Activated CD4-positive, alpha-beta T cell treated with anti-CD3 and anti-CD28 coated beads for 36 hours (primary cell): ENCODE measurements at regions of chr10 and their contacts with region 1.

Region 1: DNA sequence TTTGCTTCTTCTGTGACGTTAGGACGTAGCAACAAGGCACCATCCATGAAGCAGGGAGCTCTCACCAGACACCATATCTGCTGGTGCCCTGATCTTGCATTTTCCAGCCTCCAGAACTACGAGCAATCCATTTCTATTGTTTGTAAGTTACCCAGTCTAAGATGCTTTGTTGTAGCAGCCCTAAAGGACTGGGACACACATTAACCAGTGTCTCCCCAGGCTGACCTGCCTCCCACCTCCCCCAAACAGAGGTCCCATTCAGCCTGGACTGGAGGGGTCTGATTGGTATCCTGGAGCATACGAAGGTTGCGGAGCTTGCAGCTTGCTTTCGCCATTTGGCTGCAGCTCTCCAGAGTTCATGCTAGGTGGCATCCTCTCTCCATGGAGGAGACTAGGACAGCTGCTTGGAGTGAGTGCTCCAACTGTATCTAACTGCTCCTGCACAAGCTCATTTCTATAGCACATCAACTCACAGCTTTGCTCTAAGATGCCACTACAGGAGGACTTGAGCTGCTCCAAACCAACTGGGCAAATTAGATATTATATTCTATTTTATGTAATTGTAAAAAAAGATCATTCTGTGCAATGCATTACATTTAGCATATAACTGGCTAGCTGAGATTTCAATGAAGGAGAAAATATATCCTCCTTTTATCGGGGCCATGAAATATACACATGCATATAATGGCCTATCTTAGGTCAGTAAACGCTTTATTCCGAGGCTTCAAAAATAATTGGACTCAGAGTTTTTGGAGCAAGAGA is 8.0 kb upstream of the GRK5 start:
- DNase-seq: peak; percentile 66
- ATAC-seq: peak; percentile 85
- H3K4me3 Mint-ChIP-seq: no peak overlapping the region
- H3K27ac Mint-ChIP-seq: no peak overlapping the region
- H3K4me1 Mint-ChIP-seq: peaks cover 13% of the 10 kb centered on the region
- H3K27me3 Mint-ChIP-seq: no peaks in the 10 kb centered on the region

Region 2: GRCh38 chr10:119139464-119140067 is 59.8 kb before region 1 on chr10:
- CTCF ChIA-PET with region 1: interaction called, 6 read pairs
- POLR2A ChIA-PET with region 1: no interaction called
- intact Hi-C with region 1: loop called in 1 of 2 experiments (anchors 2 kb)
- DNase-seq: peak; percentile 73
- ATAC-seq: peak; percentile 76
- H3K4me3 Mint-ChIP-seq: no peak overlapping the region
- H3K27ac Mint-ChIP-seq: peak overlapping the region; percentile 14
- H3K4me1 Mint-ChIP-seq: peaks cover 14% of the 10 kb centered on the region
- H3K27me3 Mint-ChIP-seq: no peaks in the 10 kb centered on the region

Region 3: DNA sequence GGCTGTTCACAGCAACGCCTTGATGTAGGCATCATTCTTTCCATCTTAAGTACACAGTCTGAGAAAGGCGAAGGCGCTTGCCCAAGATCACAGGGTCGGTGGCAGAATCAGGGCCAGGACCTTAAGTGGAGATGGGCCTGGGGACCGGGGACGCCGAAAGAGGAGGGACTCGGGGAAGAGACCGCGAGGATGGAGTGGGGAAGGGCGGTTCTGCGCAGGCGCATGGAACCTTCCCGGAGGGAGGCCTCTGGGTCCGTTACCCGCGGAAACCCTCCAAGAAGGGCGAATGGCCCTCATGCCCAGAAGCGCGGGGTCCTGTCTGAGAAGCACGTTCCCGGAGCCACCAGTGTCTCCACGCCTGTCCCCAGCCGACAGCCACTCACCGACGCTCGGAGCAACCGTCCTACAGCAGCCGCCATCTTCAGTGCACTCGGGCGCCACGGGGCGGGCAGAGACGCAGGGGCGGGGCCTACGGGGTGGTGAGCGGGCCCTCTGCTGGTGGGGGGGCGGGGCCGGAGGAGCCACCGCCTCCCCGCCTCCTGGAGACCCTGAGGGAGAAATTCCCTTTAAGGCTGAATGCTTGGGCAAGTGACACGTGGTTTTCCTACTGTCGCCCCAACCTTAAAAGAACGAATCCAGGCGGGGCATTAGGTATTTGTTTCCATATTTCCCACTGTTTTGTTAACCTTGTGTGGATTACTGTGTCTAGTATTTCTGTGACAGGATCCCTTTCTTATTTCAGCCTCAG is 20.9 kb before region 1 on chr10 and contains the start of gene PRDX3:
- CTCF ChIA-PET with region 1: interaction called, 21 read pairs
- POLR2A ChIA-PET with region 1: no interaction called
- intact Hi-C with region 1: no loop called
- DNase-seq: peak; percentile 98
- ATAC-seq: peak; percentile 95
- H3K4me3 Mint-ChIP-seq: peak within 1 kb of the TSS; percentile 88
- H3K27ac Mint-ChIP-seq: peak within 1 kb of the TSS; percentile 95
- H3K4me1 Mint-ChIP-seq: peaks cover 36% of the 10 kb centered on the region
- H3K27me3 Mint-ChIP-seq: no peaks in the 10 kb centered on the region
- total RNA-seq, gene PRDX3: 160 to 217 TPM

Region 4: GRCh38 chr10:119416855-119417254 is 217.4 kb after region 1 on chr10:
- CTCF ChIA-PET with region 1: interaction called, 33 read pairs
- POLR2A ChIA-PET with region 1: no interaction called
- intact Hi-C with region 1: loop called (anchors 1 to 2 kb)
- DNase-seq: peak; percentile 86
- ATAC-seq: peak; percentile 93
- H3K4me3 Mint-ChIP-seq: no peak overlapping the region
- H3K27ac Mint-ChIP-seq: no peak overlapping the region
- H3K4me1 Mint-ChIP-seq: no peaks in the 10 kb centered on the region
- H3K27me3 Mint-ChIP-seq: no peaks in the 10 kb centered on the region

Region 5: GRCh38 chr10:119489991-119490326 is 290.5 kb after region 1 on chr10:
- CTCF ChIA-PET with region 1: interaction called, 4 read pairs
- POLR2A ChIA-PET with region 1: no interaction called
- intact Hi-C with region 1: loop called (anchors 2 to 5 kb)
- DNase-seq: no peak
- ATAC-seq: no peak
- H3K4me3 Mint-ChIP-seq: peak overlapping the region; percentile 67
- H3K27ac Mint-ChIP-seq: peak overlapping the region; percentile 92
- H3K4me1 Mint-ChIP-seq: peaks cover 43% of the 10 kb centered on the region
- H3K27me3 Mint-ChIP-seq: no peaks in the 10 kb centered on the region

Region 6: DNA sequence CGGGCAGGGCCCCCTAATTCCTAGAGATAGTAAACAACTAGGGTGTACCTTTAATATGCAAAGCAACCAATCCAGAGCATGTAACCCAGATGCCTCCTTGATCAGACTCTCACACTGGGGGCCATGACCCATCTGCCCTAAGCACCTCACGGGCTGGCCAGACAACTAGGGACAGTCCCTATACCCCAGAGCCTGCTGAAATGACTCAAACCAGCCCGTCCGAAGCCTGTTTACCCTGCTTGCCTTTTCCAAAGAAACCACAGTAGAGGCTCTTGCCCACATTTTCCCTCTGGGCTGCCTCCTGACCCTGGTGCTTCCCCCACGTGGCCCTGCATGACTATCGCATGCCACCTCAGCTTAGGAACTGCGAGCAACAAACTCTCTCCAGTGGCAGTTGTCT is 296.9 kb after region 1 on chr10:
- CTCF ChIA-PET with region 1: interaction called, 6 read pairs
- POLR2A ChIA-PET with region 1: no interaction called
- intact Hi-C with region 1: loop called in 1 of 2 experiments (anchors 5 kb)
- DNase-seq: peak; percentile 83
- ATAC-seq: peak; percentile 74
- H3K4me3 Mint-ChIP-seq: no peak overlapping the region
- H3K27ac Mint-ChIP-seq: peak overlapping the region; percentile 75
- H3K4me1 Mint-ChIP-seq: peaks cover 86% of the 10 kb centered on the region
- H3K27me3 Mint-ChIP-seq: no peaks in the 10 kb centered on the region